ENCODE measurements at regions of chr3 and their contacts with region 1.

Region 1: DNA sequence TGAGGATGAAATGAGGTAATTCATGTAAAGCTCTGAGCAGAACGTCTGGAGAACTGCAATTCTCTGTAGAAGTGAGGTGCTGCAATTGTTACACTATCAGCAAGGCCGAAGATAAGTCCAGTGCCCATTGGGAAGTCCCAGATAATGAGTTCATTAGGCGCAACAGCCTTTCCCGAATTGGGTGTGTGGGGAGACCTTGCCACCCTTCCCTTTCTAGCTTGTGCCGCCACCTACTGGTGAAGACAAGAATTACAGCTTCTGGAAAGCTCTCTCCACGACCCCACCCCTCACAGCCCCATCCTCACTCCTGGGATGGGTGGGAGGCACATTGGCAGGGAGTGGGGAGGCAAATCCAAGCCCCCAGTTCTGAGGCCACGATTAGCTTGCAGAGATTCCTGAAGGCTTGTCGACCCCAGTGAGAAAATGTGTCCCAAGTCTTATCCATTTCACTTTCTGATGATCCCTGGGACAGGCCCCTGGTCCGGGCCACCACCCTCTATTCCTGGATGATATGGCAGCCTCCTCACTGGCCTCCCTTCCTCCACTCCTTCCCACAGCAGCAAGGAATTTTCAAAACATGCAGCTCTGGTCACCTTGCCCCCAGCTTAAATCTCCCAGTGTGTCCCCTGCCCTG is 36.4 kb downstream of the FAM3D start:
- DNase-seq: peak; percentile 27 to 36
- ATAC-seq: peak; percentile 57 to 90
- H3K4me3 ChIP-seq: no peak overlapping the region
- H3K27ac ChIP-seq: no peak overlapping the region
- H3K4me1 ChIP-seq: no peaks in the 10 kb centered on the region
- CTCF ChIP-seq: peak; percentile 64
- EP300 ChIP-seq: no peak
- POLR2A ChIP-seq: no peak
- RAD21 ChIP-seq: peak; percentile 81 to 84

Region 2: DNA sequence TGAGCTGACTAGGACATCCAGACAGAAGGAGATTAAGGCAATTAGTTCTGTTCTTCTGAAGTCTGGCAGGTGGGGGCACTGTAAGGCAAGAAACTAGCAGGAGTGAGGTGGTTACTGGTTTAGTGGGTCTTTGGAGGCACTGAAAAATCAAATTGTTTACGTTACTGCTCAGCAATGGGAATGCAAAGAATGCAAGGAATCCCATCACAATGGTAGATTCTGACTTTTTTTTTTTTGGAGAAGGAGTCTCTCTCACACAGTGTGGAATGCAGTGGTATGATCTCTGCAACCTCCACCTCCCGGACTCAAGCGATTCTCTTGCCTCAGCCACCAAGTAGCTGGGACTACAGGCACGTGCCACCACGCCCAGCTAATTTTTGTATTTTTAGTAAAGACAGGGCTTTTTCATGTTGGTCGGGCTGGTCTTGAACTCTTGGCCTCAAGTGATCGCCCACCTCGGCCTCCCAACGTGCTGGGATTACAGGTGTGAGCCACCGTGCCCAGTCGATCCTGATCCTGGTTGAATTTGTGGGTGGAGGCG is 69.4 kb before region 1 on chr3:
- CTCF ChIA-PET with region 1: interaction called, 126 read pairs
- POLR2A ChIA-PET with region 1: no interaction called
- DNase-seq: peak; percentile 42 to 67
- ATAC-seq: peak; percentile 76 to 80
- H3K4me3 ChIP-seq: no peak overlapping the region
- H3K27ac ChIP-seq: peak overlapping the region; percentile 38 to 66; a peak in 4 of 6 replicates
- H3K4me1 ChIP-seq: peaks cover 32% of the 10 kb centered on the region
- CTCF ChIP-seq: peak; percentile 33
- EP300 ChIP-seq: no peak
- POLR2A ChIP-seq: no peak
- RAD21 ChIP-seq: peak; percentile 50 to 76

Region 3: GRCh38 chr3:58568572-58569286 is 61.5 kb before region 1 on chr3:
- CTCF ChIA-PET with region 1: interaction called, 126 read pairs
- POLR2A ChIA-PET with region 1: no interaction called
- DNase-seq: peak; percentile 33 to 56
- ATAC-seq: peak; percentile 40 to 80; a peak in 4 of 6 replicates
- H3K4me3 ChIP-seq: no peak overlapping the region
- H3K27ac ChIP-seq: 0 out of 6 replicates have a peak overlapping the region, but pooled peaks of 1 of the 2 experiments have one; percentile 18
- H3K4me1 ChIP-seq: peaks cover 16% of the 10 kb centered on the region
- CTCF ChIP-seq: peak; percentile 78
- EP300 ChIP-seq: no peak
- POLR2A ChIP-seq: no peak
- RAD21 ChIP-seq: peak; percentile 60 to 68

Region 4: DNA sequence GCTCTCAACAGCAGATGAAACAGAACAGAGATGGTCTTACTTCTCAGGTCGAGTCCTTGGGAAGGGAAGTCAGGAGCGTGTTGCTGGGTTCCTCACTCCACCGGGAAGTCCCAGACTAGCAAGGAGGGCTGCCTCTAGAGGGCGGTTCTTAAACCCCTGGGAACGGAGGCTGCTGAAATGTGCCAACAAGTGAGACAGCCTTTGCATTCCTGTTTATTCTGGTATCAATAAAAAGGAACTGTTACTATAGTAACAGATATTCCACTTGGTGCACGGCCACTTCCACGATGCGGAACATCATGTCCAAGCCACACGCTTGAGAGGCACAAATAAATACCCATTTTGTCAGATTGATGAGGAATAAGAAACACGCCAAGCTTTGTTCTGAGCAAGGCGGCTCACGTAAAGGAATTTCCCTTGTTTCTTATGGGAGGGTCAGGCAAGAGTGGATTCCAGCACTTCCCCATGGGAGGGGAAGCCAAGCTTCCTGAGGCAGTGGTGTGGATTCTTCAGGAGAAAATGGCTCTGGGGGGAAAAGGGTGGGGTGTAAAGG is 52.8 kb before region 1 on chr3 and contains the start of gene FAM107A:
- CTCF ChIA-PET with region 1: interaction called, 18 read pairs
- POLR2A ChIA-PET with region 1: no interaction called
- DNase-seq: peak in 1 of 2 experiments; percentile 30
- ATAC-seq: peak; percentile 64 to 84; a peak in 4 of 6 replicates
- H3K4me3 ChIP-seq: no peak within 1 kb of the TSS
- H3K27ac ChIP-seq: no peak within 1 kb of the TSS
- H3K4me1 ChIP-seq: peaks cover 6% of the 10 kb centered on the region; the same call in 1 of the 3 replicates
- CTCF ChIP-seq: no peak
- EP300 ChIP-seq: no peak
- POLR2A ChIP-seq: no peak
- RAD21 ChIP-seq: no peak
- polyA plus RNA-seq, gene FAM107A: 0.03 and 0.04 TPM in 2 replicates

Region 5: DNA sequence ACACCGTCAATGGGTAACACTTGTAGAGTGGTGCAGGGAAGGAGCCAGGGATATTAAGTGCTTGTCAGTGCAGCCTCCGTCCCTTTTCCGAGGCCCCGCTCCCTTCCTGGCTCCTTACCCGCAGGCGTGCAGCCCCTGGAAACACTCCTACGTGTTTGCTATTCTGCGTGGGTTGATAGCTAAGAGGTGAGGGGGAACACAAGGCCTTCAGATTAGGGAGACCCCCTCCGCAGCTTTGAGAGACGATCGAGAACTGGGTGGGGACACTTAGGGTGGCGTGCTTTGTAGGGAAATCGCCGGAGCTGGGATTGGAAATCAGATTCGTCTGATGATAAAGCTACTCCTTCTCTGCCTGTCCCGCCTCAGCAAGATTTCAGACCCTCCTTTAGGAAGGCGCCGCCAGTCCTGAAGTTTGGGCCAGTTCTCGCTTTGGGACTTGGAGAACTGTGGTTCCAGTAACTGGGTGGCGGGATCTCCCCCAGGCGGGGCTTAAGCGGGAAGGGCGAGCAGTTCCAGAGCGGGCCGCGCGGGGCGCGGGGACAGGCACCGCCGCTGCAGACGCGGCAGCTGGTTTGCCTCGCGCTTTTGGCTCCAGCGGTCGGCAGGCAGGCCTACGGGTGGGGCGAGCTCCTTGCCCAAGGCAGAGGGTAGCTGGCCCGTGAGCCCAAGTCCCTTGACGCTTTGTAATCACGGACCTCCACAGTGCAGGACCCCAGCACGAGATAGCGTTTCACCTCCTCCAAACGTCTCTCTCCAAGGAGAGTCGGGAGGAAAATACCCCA is 45.0 kb before region 1 on chr3:
- CTCF ChIA-PET with region 1: interaction called, 11 read pairs
- POLR2A ChIA-PET with region 1: no interaction called
- DNase-seq: peak; percentile 66 to 91
- ATAC-seq: peak; percentile 95 to 99
- H3K4me3 ChIP-seq: peak overlapping the region; percentile 68
- H3K27ac ChIP-seq: peak overlapping the region; percentile 63 to 85; a peak in 5 of 6 replicates
- H3K4me1 ChIP-seq: peaks cover 11% of the 10 kb centered on the region; the same call in 1 of the 3 replicates
- CTCF ChIP-seq: peak; percentile 31; the same call in 2 of the 3 replicates
- EP300 ChIP-seq: no peak
- POLR2A ChIP-seq: no peak
- RAD21 ChIP-seq: peak in 1 of 2 experiments; percentile 17; a peak in 2 of 5 replicates

Region 6: DNA sequence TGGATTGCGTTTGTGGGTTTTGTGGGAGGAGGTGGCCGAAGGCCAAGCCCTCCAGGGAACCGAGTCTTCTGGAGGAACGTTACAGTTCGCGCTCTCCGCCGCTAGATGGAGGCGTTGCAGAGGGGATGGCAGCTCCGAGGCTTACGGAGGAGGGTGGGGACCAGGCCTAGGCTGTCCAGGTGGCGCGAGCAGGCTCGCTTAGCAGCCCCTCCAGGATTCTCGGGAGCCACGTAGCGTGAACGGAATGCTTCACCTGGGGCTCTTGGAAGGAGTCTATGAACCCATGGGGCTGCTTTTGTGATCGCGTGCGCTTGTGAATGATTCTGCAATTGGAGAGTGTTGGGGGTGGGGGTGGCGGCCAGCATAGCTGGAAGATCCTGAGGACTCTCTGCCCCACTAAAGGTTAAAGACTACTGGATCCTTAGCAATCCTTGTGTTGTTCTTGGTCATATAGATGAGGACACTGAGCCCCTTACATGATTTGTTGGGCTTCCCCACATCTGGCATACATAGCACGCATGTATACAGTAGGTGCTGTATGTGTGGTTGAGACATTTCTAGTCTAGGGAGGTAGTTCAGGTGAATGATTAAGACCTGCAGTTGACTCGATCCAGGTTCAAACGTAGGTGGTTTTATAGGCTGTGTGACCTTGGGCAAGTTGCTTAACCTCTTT is 10.6 kb after region 1 on chr3:
- CTCF ChIA-PET with region 1: interaction called, 29 read pairs
- POLR2A ChIA-PET with region 1: no interaction called
- DNase-seq: peak; percentile 53 to 61
- ATAC-seq: peak; percentile 93 to 98
- H3K4me3 ChIP-seq: no peak overlapping the region
- H3K27ac ChIP-seq: no peak overlapping the region
- H3K4me1 ChIP-seq: no peaks in the 10 kb centered on the region
- CTCF ChIP-seq: peak; percentile 72
- EP300 ChIP-seq: no peak
- POLR2A ChIP-seq: no peak
- RAD21 ChIP-seq: peak; percentile 87 to 92

Region 7: DNA sequence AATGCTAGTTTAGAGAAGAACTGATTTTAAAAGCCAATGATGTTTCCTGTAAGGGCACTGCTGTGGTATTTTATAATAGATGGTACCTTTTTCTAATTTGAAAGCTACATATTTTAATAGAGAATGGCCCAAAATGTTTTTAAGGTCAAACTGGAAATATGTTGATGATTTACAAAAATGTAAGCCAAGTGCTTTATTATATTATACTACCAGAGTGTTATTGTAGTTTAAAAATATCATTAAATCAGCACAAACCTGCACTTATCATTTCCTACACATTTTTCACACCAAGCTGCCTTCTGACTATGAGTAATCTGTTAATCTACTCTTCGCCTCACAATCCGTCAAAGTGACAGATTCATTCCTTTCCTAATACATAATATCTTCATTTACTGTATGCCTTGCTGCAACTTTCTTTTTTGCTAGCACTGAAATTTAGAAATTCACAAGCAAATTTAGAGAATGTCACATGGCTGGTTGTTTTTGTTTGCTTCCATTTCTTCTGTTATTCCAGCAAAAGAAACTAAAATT is 162.8 kb after region 1 on chr3:
- CTCF ChIA-PET with region 1: no interaction called
- POLR2A ChIA-PET with region 1: no interaction called
- DNase-seq: no peak
- ATAC-seq: no peak
- H3K4me3 ChIP-seq: no peak overlapping the region
- H3K27ac ChIP-seq: no peak overlapping the region
- H3K4me1 ChIP-seq: no peaks in the 10 kb centered on the region
- CTCF ChIP-seq: no peak
- EP300 ChIP-seq: no peak
- POLR2A ChIP-seq: no peak
- RAD21 ChIP-seq: no peak